PC-3 (cell line): ENCODE measurements at regions of chr1 and their contacts with region 1.

Region 1: DNA sequence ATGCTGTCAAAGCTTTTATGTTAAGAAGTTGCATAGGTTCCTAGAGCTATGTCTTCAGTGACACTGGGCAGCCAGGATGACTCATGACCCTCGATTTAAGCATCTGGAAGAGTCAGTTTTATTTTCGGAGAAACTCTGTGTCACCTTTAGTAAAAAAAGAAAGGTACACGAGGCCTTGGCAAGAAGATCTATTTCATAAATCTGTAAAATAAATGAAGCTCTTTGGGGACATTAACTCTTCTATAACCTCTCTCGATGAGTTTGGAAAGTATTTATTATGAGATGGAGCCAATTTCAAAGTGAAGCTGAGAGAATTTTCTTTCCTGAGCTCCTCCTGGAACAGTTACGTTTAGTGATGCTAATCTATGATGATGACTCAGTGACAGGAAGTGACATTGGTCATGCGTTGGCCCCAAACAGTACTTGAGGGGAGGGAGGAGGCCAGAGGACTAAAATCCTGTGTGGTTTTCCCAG is 156.5 kb downstream of the HLX start:
- DNase-seq: peak; percentile 92
- ATAC-seq: peak; percentile 46
- H3K4me3 ChIP-seq: peak overlapping the region; percentile 59
- H3K27ac ChIP-seq: peak overlapping the region; percentile 90
- H3K4me1 ChIP-seq: peaks cover 50% of the 10 kb centered on the region
- H3K27me3 ChIP-seq: no peaks in the 10 kb centered on the region
- CTCF ChIP-seq: no peak

Region 2: GRCh38 chr1:219173758-219174588 is 1861.7 kb before region 1 on chr1 and contains the start of gene LYPLAL1:
- CTCF ChIA-PET with region 1: no interaction called
- POLR2A ChIA-PET with region 1: no interaction called
- intact Hi-C with region 1: loop called (anchors 10 kb)
- DNase-seq: peak; percentile 98
- ATAC-seq: peak; percentile 75
- H3K4me3 ChIP-seq: peak within 1 kb of the TSS; percentile 69
- H3K27ac ChIP-seq: peak within 1 kb of the TSS; percentile 23
- H3K4me1 ChIP-seq: peaks cover 47% of the 10 kb centered on the region
- H3K27me3 ChIP-seq: no peaks in the 10 kb centered on the region
- CTCF ChIP-seq: peak; percentile 51; the same call in 1 of the 2 replicates
- total RNA-seq, gene LYPLAL1: 15.8 and 21.3 TPM in 2 replicates

Region 3: GRCh38 chr1:220879076-220879508 is 156.6 kb before region 1 on chr1 and contains the start of gene HLX:
- CTCF ChIA-PET with region 1: no interaction called
- POLR2A ChIA-PET with region 1: no interaction called
- intact Hi-C with region 1: loop called (anchors 2 kb)
- DNase-seq: peak; percentile 96
- ATAC-seq: peak; percentile 89
- H3K4me3 ChIP-seq: peak within 1 kb of the TSS; percentile 85
- H3K27ac ChIP-seq: peak within 1 kb of the TSS; percentile 20
- H3K4me1 ChIP-seq: peaks cover 16% of the 10 kb centered on the region; the same call in 1 of the 2 replicates
- H3K27me3 ChIP-seq: no peaks in the 10 kb centered on the region
- CTCF ChIP-seq: no peak
- total RNA-seq, gene HLX: 4.0 and 8.1 TPM in 2 replicates

Region 4: GRCh38 chr1:220918285-220918951 is 117.3 kb before region 1 on chr1:
- CTCF ChIA-PET with region 1: no interaction called
- POLR2A ChIA-PET with region 1: no interaction called
- intact Hi-C with region 1: loop called (anchors 1 kb)
- DNase-seq: peak; percentile 58
- ATAC-seq: peak; percentile 93
- H3K4me3 ChIP-seq: no peak overlapping the region
- H3K27ac ChIP-seq: no peak overlapping the region
- H3K4me1 ChIP-seq: peaks cover 11% of the 10 kb centered on the region
- H3K27me3 ChIP-seq: no peaks in the 10 kb centered on the region
- CTCF ChIP-seq: no peak

Region 5: GRCh38 chr1:220990427-220991339 is 45.0 kb before region 1 on chr1:
- CTCF ChIA-PET with region 1: no interaction called
- POLR2A ChIA-PET with region 1: interaction called, 4 read pairs
- intact Hi-C with region 1: loop called (anchors 2 kb)
- DNase-seq: peak; percentile 85
- ATAC-seq: peak; percentile 87
- H3K4me3 ChIP-seq: no peak overlapping the region
- H3K27ac ChIP-seq: peak overlapping the region; percentile 56
- H3K4me1 ChIP-seq: peaks cover 20% of the 10 kb centered on the region
- H3K27me3 ChIP-seq: no peaks in the 10 kb centered on the region
- CTCF ChIP-seq: peak; percentile 63

Region 6: DNA sequence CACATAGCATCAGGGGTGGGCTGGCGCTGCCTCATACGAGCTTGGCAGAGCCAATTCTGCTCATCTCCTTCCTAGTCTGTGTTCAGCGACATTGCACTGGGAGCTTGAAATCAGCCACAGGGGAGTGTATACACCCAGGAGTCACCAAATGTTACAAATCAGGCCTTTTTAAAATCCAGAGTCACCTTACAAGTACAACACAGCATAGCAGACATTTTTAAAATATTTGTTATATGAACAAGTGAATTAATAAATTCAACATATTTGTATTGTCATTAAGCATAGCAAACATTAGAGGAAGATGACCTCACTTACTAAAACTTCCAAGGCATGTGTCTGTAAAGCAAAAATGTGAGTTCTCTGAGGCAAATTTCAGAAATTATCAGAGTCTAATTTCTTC is 53.5 kb after region 1 on chr1:
- CTCF ChIA-PET with region 1: no interaction called
- POLR2A ChIA-PET with region 1: no interaction called
- intact Hi-C with region 1: loop called (anchors 1 kb)
- DNase-seq: peak; percentile 89
- ATAC-seq: peak; percentile 86
- H3K4me3 ChIP-seq: peak overlapping the region; percentile 17; the same call in 1 of the 2 replicates
- H3K27ac ChIP-seq: peak overlapping the region; percentile 30
- H3K4me1 ChIP-seq: peaks cover 54% of the 10 kb centered on the region
- H3K27me3 ChIP-seq: no peaks in the 10 kb centered on the region
- CTCF ChIP-seq: no peak

Region 7: DNA sequence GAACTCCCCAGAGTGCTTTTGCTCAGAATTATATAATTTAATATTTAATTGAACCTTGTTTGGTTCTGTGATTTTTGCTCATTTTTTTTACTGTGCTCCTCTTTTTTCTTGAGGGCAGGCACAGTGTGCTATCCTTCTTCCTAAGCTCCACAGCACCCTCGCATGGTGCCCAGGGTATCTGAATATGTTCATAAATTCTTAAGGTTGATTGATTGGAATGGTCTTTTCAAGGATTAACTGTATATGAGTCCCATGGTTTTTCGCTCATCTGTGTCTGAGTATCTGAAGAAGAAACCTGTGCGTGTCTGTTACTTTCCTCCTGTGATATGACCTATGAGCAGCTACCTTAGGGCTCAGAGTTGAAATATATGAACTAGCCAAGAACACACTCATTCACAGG is 237.2 kb after region 1 on chr1:
- CTCF ChIA-PET with region 1: no interaction called
- POLR2A ChIA-PET with region 1: no interaction called
- intact Hi-C with region 1: loop called (anchors 5 kb)
- DNase-seq: peak; percentile 68
- ATAC-seq: peak; percentile 88
- H3K4me3 ChIP-seq: no peak overlapping the region
- H3K27ac ChIP-seq: no peak overlapping the region
- H3K4me1 ChIP-seq: no peaks in the 10 kb centered on the region
- H3K27me3 ChIP-seq: no peaks in the 10 kb centered on the region
- CTCF ChIP-seq: peak; percentile 81